ENCODE measurements at regions of chr2 and their contacts with region 1.

Region 1: DNA sequence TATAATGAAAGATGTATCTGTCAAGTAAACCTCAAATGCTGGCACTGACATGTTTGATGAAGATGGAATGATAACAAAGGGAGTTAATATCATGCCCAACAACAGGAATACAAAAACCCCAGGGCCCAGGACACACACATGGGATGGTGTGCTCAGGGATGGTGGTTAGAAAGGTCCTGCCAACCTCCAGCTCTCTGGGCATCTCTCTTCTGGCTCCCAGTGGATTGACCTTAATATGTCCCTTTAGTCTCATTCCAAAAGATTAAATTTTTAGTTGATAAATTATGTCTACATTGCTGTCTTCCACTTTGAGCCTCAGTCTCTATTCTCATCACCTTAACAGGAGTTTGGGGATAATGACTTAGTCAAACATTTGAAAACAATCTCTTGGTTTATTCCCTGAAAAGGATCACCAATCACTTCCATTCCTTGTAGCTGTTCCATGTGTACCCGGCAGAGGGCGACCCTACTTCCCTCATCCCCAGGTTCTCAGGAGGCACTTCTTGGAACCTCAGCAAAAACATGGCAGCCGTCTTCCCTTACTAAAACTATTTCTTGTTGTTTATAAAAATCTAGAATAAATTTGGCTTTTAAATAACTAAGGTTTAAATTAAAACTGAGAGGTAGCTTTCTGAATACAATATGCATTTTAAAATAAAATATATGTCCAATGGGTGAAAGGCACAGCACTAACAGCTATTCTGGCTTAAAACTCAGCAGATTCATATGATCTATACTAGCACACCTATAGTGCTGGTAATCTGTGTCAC is 29.6 kb downstream of the MCEE start:
- DNase-seq: peak; percentile 44
- H3K4me3 Mint-ChIP-seq: no peak overlapping the region
- H3K27ac Mint-ChIP-seq: no peak overlapping the region
- H3K4me1 Mint-ChIP-seq: no peaks in the 10 kb centered on the region
- H3K27me3 Mint-ChIP-seq: peaks cover 4% of the 10 kb centered on the region

Region 2: DNA sequence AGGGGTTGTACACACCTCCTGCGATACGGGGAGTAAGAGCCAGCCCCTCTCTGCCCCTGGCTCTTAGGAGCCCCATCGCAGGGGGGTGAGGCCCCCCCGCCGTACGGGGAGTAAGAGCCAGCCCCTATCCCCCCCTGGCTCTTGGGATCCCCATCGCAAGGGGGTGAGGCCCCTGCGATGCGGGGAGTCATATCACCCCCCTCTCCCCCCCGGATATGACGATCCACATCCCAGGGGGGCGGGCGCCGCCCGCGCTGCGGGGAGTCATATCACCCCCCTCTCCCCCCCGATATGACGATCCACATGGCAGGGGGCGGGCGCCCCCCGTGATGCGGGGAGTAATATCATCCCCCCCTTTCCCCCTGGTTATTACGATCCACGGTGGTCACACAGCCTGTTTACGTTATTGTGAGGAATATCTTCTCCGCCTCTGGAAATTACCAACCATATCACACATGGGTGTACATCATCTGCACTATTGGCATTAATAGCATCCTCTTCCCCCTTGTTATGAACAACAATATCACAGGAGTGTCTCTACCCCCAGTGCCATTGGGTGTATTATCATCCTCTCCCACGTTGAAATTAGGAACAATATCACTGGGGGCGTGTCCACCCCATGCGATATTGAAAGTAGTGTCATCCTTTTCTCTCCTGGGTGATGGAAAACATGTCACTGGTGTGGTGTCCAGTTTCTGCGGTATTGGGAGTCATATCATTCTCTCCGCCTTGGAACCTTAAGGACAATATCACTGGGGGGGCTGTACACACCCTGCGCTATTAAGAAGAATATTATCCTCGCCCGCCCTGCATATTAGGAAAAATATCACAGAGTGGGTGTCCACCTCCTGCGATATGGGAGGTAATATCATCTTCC is 56.6 kb before region 1 on chr2:
- CTCF ChIA-PET with region 1: no interaction called
- POLR2A ChIA-PET with region 1: no interaction called
- DNase-seq: no peak
- H3K4me3 Mint-ChIP-seq: no peak overlapping the region
- H3K27ac Mint-ChIP-seq: no peak overlapping the region
- H3K4me1 Mint-ChIP-seq: no peaks in the 10 kb centered on the region
- H3K27me3 Mint-ChIP-seq: no peaks in the 10 kb centered on the region

Region 3: GRCh38 chr2:71113843-71114242 is 13.5 kb after region 1 on chr2:
- CTCF ChIA-PET with region 1: interaction called, 31 read pairs
- POLR2A ChIA-PET with region 1: no interaction called
- DNase-seq: no peak
- H3K4me3 Mint-ChIP-seq: no peak overlapping the region
- H3K27ac Mint-ChIP-seq: no peak overlapping the region
- H3K4me1 Mint-ChIP-seq: peaks cover 4% of the 10 kb centered on the region
- H3K27me3 Mint-ChIP-seq: no peaks in the 10 kb centered on the region

Region 4: DNA sequence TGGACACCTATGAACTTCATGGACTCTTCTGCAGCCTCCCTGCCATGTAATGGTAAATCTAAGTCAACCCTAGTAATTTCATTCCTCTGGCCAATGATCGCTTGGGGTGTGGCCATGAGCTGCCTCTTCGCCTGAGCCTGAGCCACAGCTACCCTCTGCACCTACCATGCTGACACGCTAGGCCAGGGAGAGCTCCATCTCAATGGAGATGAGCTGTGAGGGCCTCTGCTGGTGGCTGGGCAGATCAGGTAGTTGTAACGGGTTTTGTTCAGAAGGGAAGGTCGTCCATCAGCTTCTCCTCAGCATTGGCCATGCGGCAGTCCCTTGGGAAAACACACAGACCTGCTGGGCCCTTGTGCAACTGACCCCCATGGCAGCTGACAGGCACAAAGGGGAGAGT is 54.4 kb after region 1 on chr2:
- CTCF ChIA-PET with region 1: interaction called, 12 read pairs
- POLR2A ChIA-PET with region 1: no interaction called
- DNase-seq: peak; percentile 36
- H3K4me3 Mint-ChIP-seq: no peak overlapping the region
- H3K27ac Mint-ChIP-seq: no peak overlapping the region
- H3K4me1 Mint-ChIP-seq: peaks cover 3% of the 10 kb centered on the region
- H3K27me3 Mint-ChIP-seq: peaks cover 3% of the 10 kb centered on the region